ENCODE measurements at regions of chr5 and their contacts with region 1.

Region 1: GRCh38 chr5:143355720-143356119 is 47.8 kb downstream of the NR3C1 start:
- DNase-seq: peak; percentile 23
- ATAC-seq: no peak
- H3K4me3 ChIP-seq: no peak overlapping the region
- H3K4me3 Mint-ChIP-seq: no peak overlapping the region
- H3K27ac ChIP-seq: peak overlapping the region in 1 of 2 donors; percentile 52
- H3K27ac Mint-ChIP-seq: no peak overlapping the region
- H3K4me1 ChIP-seq: peaks cover 34 to 58% of the 10 kb centered on the region in 2 donors
- H3K4me1 Mint-ChIP-seq: peaks cover 76% of the 10 kb centered on the region
- H3K27me3 ChIP-seq: no peaks in the 10 kb centered on the region
- H3K27me3 Mint-ChIP-seq: no peaks in the 10 kb centered on the region
- CTCF ChIP-seq: no peak

Region 2: DNA sequence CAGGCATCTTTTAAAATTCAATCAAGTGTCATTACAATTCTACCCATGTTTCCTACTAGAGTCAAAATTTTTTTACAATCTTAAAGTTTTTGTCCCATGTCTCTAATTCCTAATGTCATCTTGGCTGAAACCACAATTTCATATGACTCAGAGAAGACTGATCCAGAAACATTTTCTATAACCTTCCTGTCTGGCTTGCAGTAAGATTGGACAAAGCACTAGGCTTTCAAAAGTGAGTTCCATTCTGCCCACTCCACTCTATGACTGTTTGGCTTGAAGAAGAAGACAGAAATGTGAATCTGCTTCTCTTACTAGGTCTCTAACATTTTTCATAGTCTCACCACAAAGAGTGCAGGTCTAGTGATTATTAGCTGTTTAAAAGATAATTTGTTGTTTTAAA is 41.1 kb before region 1 on chr5:
- CTCF ChIA-PET with region 1: no interaction called
- POLR2A ChIA-PET with region 1: no interaction called
- intact Hi-C with region 1: loop called (anchors 5 kb)
- DNase-seq: no peak
- ATAC-seq: no peak
- H3K4me3 ChIP-seq: no peak overlapping the region
- H3K4me3 Mint-ChIP-seq: peak overlapping the region; percentile 1
- H3K27ac ChIP-seq: peak overlapping the region in 1 of 2 donors; percentile 61
- H3K27ac Mint-ChIP-seq: no peak overlapping the region
- H3K4me1 ChIP-seq: peaks cover 12 to 23% of the 10 kb centered on the region in 2 donors
- H3K4me1 Mint-ChIP-seq: peaks cover 62% of the 10 kb centered on the region
- H3K27me3 ChIP-seq: no peaks in the 10 kb centered on the region
- H3K27me3 Mint-ChIP-seq: no peaks in the 10 kb centered on the region
- CTCF ChIP-seq: no peak

Region 3: GRCh38 chr5:143370440-143370839 is 14.7 kb after region 1 on chr5:
- CTCF ChIA-PET with region 1: no interaction called
- POLR2A ChIA-PET with region 1: no interaction called
- intact Hi-C with region 1: loop called (anchors 2 kb)
- DNase-seq: no peak
- ATAC-seq: no peak
- H3K4me3 ChIP-seq: no peak overlapping the region
- H3K4me3 Mint-ChIP-seq: no peak overlapping the region
- H3K27ac ChIP-seq: no peak overlapping the region
- H3K27ac Mint-ChIP-seq: no peak overlapping the region
- H3K4me1 ChIP-seq: peaks cover 0 to 18% of the 10 kb centered on the region in 2 donors
- H3K4me1 Mint-ChIP-seq: peaks cover 72% of the 10 kb centered on the region
- H3K27me3 ChIP-seq: no peaks in the 10 kb centered on the region
- H3K27me3 Mint-ChIP-seq: no peaks in the 10 kb centered on the region
- CTCF ChIP-seq: no peak

Region 4: DNA sequence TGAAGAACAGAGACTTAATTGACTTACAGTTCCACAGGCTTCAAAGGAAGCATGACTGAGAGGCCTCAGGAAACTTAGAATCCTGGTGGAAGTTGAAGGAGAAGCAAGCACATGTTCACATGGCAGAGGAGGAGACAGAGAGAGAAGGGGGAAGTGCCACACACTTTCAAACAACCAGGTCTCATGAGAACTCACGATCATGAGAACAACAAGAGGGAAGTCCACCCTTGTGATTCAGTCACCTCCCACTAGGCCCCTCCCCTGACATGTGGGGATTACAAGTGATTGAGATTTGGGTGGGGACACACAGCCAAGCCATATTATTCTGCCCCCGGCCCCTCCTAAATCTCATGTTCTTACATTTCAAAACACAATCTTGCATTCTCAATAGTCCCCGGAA is 28.3 kb after region 1 on chr5:
- CTCF ChIA-PET with region 1: no interaction called
- POLR2A ChIA-PET with region 1: no interaction called
- intact Hi-C with region 1: no loop called
- DNase-seq: no peak
- ATAC-seq: no peak
- H3K4me3 ChIP-seq: no peak overlapping the region
- H3K4me3 Mint-ChIP-seq: no peak overlapping the region
- H3K27ac ChIP-seq: no peak overlapping the region
- H3K27ac Mint-ChIP-seq: no peak overlapping the region
- H3K4me1 ChIP-seq: peaks cover 4 to 17% of the 10 kb centered on the region in 2 donors
- H3K4me1 Mint-ChIP-seq: peaks cover 76% of the 10 kb centered on the region
- H3K27me3 ChIP-seq: no peaks in the 10 kb centered on the region
- H3K27me3 Mint-ChIP-seq: no peaks in the 10 kb centered on the region
- CTCF ChIP-seq: no peak

Region 5: GRCh38 chr5:143395638-143396352 is 40.1 kb after region 1 on chr5:
- CTCF ChIA-PET with region 1: no interaction called
- POLR2A ChIA-PET with region 1: no interaction called
- intact Hi-C with region 1: loop called (anchors 5 kb)
- DNase-seq: no peak
- ATAC-seq: no peak
- H3K4me3 ChIP-seq: peak overlapping the region in 2 of 5 experiments; percentile 12 to 32
- H3K4me3 Mint-ChIP-seq: peak overlapping the region; percentile 88
- H3K27ac ChIP-seq: peak overlapping the region in 1 of 2 donors; percentile 4
- H3K27ac Mint-ChIP-seq: no peak overlapping the region
- H3K4me1 ChIP-seq: peaks cover 24 to 79% of the 10 kb centered on the region in 2 donors
- H3K4me1 Mint-ChIP-seq: peaks cover 61% of the 10 kb centered on the region
- H3K27me3 ChIP-seq: no peaks in the 10 kb centered on the region
- H3K27me3 Mint-ChIP-seq: no peaks in the 10 kb centered on the region
- CTCF ChIP-seq: no peak

Region 6: DNA sequence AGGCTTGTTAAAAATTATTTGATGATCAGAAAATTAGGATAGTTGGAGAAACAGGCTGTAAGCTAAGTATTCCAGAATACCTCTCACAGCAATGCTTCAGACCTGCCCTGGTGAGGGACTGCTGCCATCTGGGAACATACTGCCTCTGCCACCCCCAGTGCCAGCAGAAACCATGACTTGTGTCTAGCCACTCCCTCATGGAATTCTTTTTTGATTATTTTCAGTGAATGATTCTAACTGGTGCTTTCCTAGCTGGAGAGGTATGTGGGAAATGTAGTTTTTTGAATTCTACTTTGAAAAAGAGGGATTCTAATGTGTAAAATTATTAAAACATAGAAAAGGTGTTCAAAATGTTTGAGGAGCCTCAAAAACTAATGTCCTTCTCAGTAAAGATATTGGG is 582.5 kb after region 1 on chr5:
- CTCF ChIA-PET with region 1: no interaction called
- POLR2A ChIA-PET with region 1: no interaction called
- intact Hi-C with region 1: no loop called
- DNase-seq: no peak
- ATAC-seq: no peak
- H3K4me3 ChIP-seq: no peak overlapping the region
- H3K4me3 Mint-ChIP-seq: no peak overlapping the region
- H3K27ac ChIP-seq: no peak overlapping the region
- H3K27ac Mint-ChIP-seq: no peak overlapping the region
- H3K4me1 ChIP-seq: no peaks in the 10 kb centered on the region
- H3K4me1 Mint-ChIP-seq: no peaks in the 10 kb centered on the region
- H3K27me3 ChIP-seq: no peaks in the 10 kb centered on the region
- H3K27me3 Mint-ChIP-seq: peaks cover 7% of the 10 kb centered on the region
- CTCF ChIP-seq: no peak